T-cell (primary cell): ENCODE measurements at regions of chr16 and their contacts with region 1.

Region 1: DNA sequence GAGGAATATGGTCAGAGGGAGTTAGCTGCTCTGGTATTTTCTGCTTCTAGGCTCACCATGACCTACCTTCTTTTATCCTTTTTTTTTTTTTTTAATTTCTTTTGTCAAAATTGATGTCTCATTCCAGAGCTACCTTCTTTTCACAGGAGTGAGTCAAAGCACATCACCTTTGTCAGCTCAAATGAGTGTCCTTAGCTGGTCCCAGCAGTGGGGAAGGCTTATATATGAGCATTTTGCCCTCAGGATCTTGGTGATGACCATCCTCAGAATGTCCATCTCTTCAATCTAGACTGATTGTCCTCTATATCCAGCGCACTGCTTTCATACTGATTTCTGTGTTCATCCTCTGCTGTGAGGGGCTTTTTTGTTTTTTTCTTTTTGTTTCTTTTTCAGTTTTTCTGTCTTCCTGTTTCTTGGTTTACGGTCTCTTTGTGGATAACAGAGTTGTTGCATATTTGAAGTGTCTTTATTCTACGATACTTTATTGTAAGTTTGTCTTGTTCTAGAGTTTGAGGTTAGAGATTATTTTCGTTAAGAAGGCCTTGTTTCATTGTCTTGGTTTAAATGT is 24.9 kb downstream of the CBFB start:
- DNase-seq: peak in 1 of 35 experiments; percentile 37
- ATAC-seq: peak; percentile 17 to 49 (median 32)
- H3K4me3 ChIP-seq: peak overlapping the region; percentile 8 to 35
- H3K4me3 Mint-ChIP-seq: peak overlapping the region; percentile 73 to 78 (median 75)
- H3K27ac ChIP-seq: peak overlapping the region; percentile 56
- H3K27ac Mint-ChIP-seq: peak overlapping the region; percentile 95
- H3K4me1 ChIP-seq: peaks cover 16 to 25% of the 10 kb centered on the region in 2 experiments
- H3K4me1 Mint-ChIP-seq: peaks cover 49 to 59% (median 50%) of the 10 kb centered on the region in 3 donors
- H3K27me3 ChIP-seq: no peaks in the 10 kb centered on the region
- H3K27me3 Mint-ChIP-seq: no peaks in the 10 kb centered on the region

Region 2: GRCh38 chr16:67034487-67034886 is 19.4 kb before region 1 on chr16:
- CTCF ChIA-PET with region 1: interaction called in 1 of 2 experiments, 3 read pairs
- POLR2A ChIA-PET with region 1: interaction called, 4 to 10 read pairs
- DNase-seq: no peak
- ATAC-seq: peak in 1 of 4 experiments; percentile 25
- H3K4me3 ChIP-seq: no peak overlapping the region
- H3K4me3 Mint-ChIP-seq: peak overlapping the region in 1 of 3 donors; percentile 35
- H3K27ac ChIP-seq: no peak overlapping the region
- H3K27ac Mint-ChIP-seq: no peak overlapping the region
- H3K4me1 ChIP-seq: peaks cover 17 to 30% of the 10 kb centered on the region in 2 experiments
- H3K4me1 Mint-ChIP-seq: peaks cover 65 to 72% (median 68%) of the 10 kb centered on the region in 3 donors
- H3K27me3 ChIP-seq: no peaks in the 10 kb centered on the region
- H3K27me3 Mint-ChIP-seq: no peaks in the 10 kb centered on the region